ENCODE measurements at regions of chr17 and their contacts with region 1.

Region 1: DNA sequence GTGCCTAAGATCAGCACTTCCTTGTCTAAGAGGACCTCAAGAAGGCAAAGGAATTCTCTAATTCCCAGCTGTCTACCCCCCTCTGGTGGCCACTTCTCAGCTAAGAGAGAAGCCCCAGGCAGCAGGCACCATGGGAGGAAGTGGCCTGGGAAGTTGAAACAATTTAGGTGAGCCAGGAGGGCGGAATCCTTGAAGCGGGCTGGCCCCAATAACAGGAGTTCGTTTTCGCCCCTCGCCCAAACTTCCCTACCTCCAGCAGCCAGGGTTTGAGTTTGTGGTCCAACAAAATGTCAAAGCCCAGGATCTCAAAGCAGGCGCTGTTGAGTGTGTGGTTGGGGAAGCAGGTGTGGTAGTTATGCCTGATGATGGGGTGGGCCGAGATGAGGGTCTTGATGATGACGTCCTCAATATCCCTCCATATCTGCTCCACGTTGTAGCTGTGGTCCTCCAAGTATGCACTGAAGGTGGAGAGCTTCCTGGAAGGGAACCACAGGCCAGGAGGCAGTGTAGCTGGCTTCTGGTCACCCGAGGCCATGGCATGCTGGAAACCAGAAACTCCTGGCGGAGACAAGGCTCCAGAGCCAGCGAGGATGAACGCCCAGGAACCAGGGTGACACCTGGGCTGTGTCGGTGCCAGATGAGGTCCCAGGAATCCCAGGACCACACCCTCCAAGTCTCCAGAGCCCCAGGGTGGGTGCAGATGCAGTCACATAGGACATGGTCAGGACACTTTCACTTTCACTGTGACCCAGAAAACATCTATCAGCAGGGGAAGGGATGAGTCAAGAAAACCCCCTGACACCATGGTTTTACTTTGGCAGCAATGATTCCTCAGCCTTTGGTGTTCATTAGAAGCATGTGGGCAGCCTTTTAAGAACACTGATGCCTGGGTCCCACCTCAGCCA is 25.6 kb downstream of the TTLL6 start:
- DNase-seq: peak in 1 of 2 donors; percentile 53
- ATAC-seq: peak; percentile 34 to 69 (median 61)
- H3K4me3 ChIP-seq: no peak overlapping the region
- H3K4me3 Mint-ChIP-seq: no peak overlapping the region
- H3K27ac ChIP-seq: no peak overlapping the region
- H3K27ac Mint-ChIP-seq: no peak overlapping the region
- H3K4me1 ChIP-seq: peaks cover 7% of the 10 kb centered on the region
- H3K4me1 Mint-ChIP-seq: peaks cover 5 to 6% of the 10 kb centered on the region in 2 donors
- H3K27me3 ChIP-seq: no peaks in the 10 kb centered on the region
- H3K27me3 Mint-ChIP-seq: peaks cover 34 to 49% of the 10 kb centered on the region in 2 donors
- CTCF ChIP-seq: peak; percentile 23

Region 2: GRCh38 chr17:48678141-48678971 is 113.0 kb before region 1 on chr17:
- intact Hi-C with region 1: loop called (anchors 5 kb)
- DNase-seq: peak; percentile 75 to 80
- ATAC-seq: peak; percentile 85 to 99 (median 98)
- H3K4me3 ChIP-seq: no peak overlapping the region
- H3K4me3 Mint-ChIP-seq: no peak overlapping the region
- H3K27ac ChIP-seq: no peak overlapping the region
- H3K27ac Mint-ChIP-seq: no peak overlapping the region
- H3K4me1 ChIP-seq: peaks cover 9% of the 10 kb centered on the region
- H3K4me1 Mint-ChIP-seq: peaks cover 0 to 4% of the 10 kb centered on the region in 2 donors
- H3K27me3 ChIP-seq: peaks cover 4% of the 10 kb centered on the region
- H3K27me3 Mint-ChIP-seq: peaks cover 32 to 41% of the 10 kb centered on the region in 2 donors
- CTCF ChIP-seq: peak; percentile 94

Measured in natural killer cell (primary cell).